Activated naive CD4-positive, alpha-beta T cell treated with anti-CD3 and anti-CD28 coated beads for 36 hours (primary cell): ENCODE measurements at regions of chr10 and their contacts with region 1.

Region 1: DNA sequence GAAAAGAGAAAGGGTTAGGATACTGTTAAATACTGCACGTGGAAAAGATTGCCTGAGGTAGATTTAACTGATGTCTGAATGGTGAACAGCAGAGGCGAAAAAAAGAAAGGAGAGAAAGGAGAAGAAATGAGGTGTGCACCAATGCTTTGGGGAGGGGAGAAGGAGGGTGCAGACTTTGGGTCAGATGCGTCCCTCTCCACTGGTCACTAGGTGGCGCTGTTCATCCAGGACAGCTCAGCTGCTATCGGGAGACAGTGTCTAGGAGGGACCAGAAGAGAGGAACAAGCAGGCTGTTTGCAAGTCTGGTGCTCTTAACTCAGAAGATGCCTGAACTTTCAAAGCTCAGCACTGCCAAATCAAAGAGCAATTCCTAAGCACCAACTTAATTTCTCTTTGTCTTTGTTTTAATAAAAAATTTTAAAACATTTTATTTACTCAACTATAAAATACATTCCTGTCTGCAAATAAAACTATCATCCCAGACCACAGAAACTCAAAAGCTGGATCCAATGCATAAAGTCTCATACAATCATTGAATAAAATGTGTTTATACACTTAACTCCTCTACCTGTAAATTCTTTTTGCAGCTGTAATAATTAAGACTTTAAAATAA is 83.9 kb upstream of the PDLIM1 start:
- DNase-seq: peak; percentile 85
- H3K4me3 Mint-ChIP-seq: no peak overlapping the region
- H3K27ac Mint-ChIP-seq: no peak overlapping the region
- H3K4me1 Mint-ChIP-seq: peaks cover 3% of the 10 kb centered on the region
- H3K27me3 Mint-ChIP-seq: peaks cover 16% of the 10 kb centered on the region

Region 2: DNA sequence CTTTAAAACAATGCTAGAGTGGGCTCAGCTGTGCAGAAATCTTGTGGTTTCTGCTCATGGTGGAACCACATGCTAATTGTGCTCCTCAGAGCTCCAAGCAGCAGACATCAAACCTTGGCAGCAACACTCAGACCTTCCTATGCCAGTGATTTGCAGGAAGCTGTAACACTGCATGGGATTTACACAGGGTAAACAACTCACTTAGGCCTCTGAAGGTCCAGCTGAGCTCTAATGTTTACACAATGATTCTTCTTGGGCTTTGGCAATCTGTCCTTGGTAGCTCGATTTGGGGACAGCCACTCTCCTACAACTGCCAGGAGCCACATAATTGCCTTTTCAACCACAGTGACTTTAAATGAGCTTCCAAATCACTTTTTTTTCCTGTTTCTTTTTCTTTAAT is 13.8 kb after region 1 on chr10:
- CTCF ChIA-PET with region 1: interaction called, 17 read pairs
- intact Hi-C with region 1: no loop called
- DNase-seq: no peak
- H3K4me3 Mint-ChIP-seq: no peak overlapping the region
- H3K27ac Mint-ChIP-seq: no peak overlapping the region
- H3K4me1 Mint-ChIP-seq: peaks cover 8% of the 10 kb centered on the region
- H3K27me3 Mint-ChIP-seq: no peaks in the 10 kb centered on the region

Region 3: DNA sequence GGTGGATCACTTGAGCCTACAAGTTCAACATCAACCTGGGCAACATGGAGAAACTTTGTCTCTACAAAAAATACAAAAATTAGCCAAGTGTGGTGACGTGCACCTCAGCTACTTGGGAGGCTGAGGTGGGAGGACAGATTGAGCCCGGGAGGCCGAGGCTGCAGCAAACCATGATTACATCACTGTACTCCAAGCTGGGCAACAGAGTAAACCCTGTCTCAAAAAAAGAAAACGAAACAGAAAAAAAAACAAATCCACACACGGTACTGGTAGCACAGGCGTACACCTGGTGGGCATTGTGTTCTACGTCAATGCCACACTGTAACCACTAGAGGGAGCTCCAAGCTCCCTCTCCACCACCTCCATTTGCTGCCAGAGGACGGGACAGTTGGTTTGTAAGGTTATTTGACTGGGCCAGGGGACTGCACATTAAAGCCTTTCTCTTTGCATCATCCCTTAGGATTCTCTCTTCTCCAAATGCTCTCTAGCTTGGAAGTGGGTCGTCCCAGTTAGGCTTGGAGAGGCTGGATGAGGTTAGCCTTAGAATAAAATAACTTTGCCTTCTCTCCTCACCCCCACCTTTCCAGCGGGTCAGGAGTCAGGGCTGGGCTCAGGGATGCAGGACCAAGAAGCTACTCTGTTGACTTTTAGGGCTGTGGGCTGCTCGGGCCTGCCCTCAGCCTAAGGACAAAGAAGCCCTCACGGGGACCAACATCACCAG is 55.7 kb after region 1 on chr10:
- CTCF ChIA-PET with region 1: interaction called, 38 read pairs
- intact Hi-C with region 1: loop called (anchors 1 kb)
- DNase-seq: peak; percentile 51
- H3K4me3 Mint-ChIP-seq: no peak overlapping the region
- H3K27ac Mint-ChIP-seq: no peak overlapping the region
- H3K4me1 Mint-ChIP-seq: no peaks in the 10 kb centered on the region
- H3K27me3 Mint-ChIP-seq: no peaks in the 10 kb centered on the region

Region 4: GRCh38 chr10:95445837-95446486 is 71.3 kb after region 1 on chr10:
- CTCF ChIA-PET with region 1: interaction called, 28 read pairs
- intact Hi-C with region 1: loop called (anchors 1 kb)
- DNase-seq: peak; percentile 54
- H3K4me3 Mint-ChIP-seq: no peak overlapping the region
- H3K27ac Mint-ChIP-seq: no peak overlapping the region
- H3K4me1 Mint-ChIP-seq: no peaks in the 10 kb centered on the region
- H3K27me3 Mint-ChIP-seq: peaks cover 3% of the 10 kb centered on the region

Region 5: DNA sequence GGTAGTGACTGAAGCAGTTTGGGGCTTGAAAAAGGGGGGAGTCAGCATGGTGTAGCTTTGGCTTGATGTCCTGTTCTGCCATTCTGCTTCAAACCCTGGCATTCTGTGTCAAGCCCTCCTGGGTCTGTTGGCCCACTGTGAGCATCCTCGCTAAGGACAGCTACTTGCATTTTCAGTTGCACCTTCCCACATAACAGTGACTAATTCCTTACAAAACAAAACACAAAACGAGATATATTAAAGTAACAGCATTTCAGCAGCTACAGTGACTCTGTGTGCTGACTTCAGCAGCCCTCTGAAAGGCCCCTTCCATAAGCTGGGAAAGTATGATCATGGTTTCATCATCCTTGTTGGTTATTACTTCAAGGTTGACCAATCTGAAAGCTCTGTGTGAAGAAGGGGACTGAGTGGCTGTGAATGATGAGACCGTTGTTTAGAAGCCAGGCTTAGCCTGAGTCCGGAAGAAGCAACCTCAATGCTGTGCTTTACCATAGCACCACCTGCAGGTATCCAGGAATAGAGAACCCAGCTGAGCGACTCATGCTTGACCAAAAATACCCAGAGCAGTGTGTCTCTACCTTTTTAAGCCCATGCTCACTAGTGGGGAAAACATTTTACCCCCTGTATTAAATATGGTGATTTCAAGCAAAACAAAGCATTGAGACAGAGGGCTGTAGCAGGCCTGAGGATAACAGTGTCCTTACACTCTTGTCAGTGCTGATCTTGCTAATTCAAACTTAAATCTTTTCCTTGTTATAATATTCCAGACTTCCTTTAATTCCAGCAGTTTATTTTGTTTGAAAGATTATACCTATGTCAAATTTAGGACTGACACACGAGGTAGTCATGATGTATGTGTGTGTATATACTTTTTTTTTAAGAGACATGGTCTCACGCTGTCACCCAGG is 490.5 kb after region 1 on chr10:
- CTCF ChIA-PET with region 1: no interaction called
- intact Hi-C with region 1: loop called (anchors 5 kb)
- DNase-seq: peak; percentile 64
- H3K4me3 Mint-ChIP-seq: no peak overlapping the region
- H3K27ac Mint-ChIP-seq: no peak overlapping the region
- H3K4me1 Mint-ChIP-seq: peaks cover 12% of the 10 kb centered on the region
- H3K27me3 Mint-ChIP-seq: no peaks in the 10 kb centered on the region